Posterior cingulate gyrus (tissue), 11 donors: ENCODE measurements at regions of chr7 and their contacts with region 1.

Region 1: DNA sequence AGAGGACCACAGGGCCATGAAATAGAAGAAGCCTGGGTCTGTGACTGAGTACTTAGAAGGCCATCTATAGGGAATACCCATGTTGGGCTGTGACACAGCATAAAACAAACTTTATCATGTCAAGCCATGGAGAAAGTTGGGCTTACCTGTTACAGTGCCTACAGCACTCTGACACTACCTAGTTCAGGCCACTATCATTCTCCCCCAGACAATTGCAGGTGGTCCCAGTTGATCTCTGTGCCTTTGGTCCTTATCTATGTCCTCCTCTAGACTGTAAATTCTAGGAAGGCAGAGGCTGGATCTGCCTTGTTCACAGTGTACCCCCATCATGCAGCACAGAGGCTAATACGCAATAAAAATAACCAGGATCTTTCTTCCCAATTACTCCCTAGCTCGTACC is 69.1 kb downstream of the GCC1 start:
- DNase-seq: no peak

Region 2: DNA sequence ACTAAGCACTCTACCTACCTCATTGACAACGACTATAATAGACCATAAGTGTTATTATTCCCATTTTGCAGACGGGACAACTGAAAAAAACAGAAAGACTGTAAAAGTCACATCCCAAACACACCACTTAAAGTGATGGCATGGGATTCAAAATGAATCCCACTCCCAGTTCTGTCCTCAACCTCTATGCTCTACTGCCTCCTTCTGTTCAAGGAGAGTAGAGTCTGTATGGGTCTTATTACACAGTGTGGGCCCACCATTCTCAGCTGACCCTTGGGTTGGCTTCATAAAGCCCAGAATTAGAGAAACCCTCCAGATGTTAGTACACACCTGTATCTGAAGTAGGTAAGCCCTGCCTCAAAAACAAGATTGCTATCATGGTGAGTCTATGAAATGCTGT is 365.8 kb before region 1 on chr7:
- intact Hi-C with region 1: no loop called
- DNase-seq: no peak

Region 3: GRCh38 chr7:127347567-127348246 is 168.6 kb before region 1 on chr7:
- intact Hi-C with region 1: loop called (anchors 5 kb)
- DNase-seq: peak; percentile 11 to 94 (median 42)

Region 4: GRCh38 chr7:127359011-127359410 is 157.3 kb before region 1 on chr7:
- intact Hi-C with region 1: no loop called
- DNase-seq: no peak